MCF 10A (cell line): ENCODE measurements at regions of chr20 and their contacts with region 1.

Region 1: GRCh38 chr20:47501483-47502270 is at the start of gene NCOA3:
- DNase-seq: peak; percentile 95
- H3K4me3 Mint-ChIP-seq: peak within 1 kb of the TSS; percentile 94
- H3K27ac Mint-ChIP-seq: peak within 1 kb of the TSS; percentile 95
- H3K4me1 Mint-ChIP-seq: peaks cover 24% of the 10 kb centered on the region
- H3K27me3 Mint-ChIP-seq: no peaks in the 10 kb centered on the region
- CTCF ChIP-seq: peak; percentile 41
- total RNA-seq, gene NCOA3: 61.4 and 68.6 TPM in 2 replicates

Region 2: DNA sequence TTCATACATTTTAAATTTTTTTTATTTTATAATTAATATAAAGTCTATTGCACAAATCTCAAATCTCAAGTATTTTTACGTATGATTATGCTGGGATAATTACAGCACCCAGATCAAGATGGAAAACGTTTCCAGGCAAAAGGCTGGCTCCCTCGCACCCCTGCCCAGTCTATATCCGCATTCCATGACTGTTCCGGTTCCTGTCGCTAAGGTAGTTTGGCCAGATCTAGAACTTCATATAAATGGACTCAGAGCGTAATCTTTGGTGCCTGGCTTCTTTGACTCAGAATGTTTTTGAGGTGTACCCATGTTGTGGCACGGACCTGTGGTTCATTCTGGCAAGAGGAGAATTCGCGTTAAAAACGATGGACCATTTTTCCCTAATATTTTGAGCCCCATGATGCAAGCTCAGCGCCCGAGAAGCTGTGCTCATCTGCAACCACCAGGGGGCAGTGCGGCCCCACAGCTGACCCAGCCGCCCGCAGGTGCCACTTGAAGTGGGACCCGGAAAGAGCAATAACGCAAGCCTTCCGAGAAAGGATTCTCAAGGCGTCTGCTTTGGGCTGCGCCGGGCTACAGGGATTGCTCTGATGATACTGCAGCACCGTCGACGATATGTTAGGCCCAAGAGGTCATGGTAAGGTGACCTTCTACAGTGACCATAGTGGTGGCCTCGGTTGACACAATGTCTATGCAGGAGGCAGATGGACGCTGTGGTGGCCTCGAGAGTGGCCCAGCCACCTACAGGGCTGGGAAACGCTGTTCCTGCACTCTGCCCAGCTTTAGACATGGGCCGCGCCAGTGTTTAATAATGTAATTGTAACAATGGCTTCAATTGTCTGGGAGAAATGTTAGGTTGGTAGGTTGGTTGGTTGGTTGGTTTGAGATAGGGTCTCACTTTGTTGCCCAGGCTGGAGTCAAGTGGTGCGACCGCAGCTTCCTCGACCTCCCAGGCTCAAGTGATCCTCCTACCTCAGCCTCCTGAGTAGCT is 305.3 kb before region 1 on chr20:
- CTCF ChIA-PET with region 1: no interaction called
- POLR2A ChIA-PET with region 1: interaction called, 3 read pairs
- intact Hi-C with region 1: loop called (anchors 2 kb)
- DNase-seq: peak; percentile 70
- H3K4me3 Mint-ChIP-seq: no peak overlapping the region
- H3K27ac Mint-ChIP-seq: no peak overlapping the region
- H3K4me1 Mint-ChIP-seq: peaks cover 5% of the 10 kb centered on the region
- H3K27me3 Mint-ChIP-seq: no peaks in the 10 kb centered on the region
- CTCF ChIP-seq: peak; percentile 93

Region 3: DNA sequence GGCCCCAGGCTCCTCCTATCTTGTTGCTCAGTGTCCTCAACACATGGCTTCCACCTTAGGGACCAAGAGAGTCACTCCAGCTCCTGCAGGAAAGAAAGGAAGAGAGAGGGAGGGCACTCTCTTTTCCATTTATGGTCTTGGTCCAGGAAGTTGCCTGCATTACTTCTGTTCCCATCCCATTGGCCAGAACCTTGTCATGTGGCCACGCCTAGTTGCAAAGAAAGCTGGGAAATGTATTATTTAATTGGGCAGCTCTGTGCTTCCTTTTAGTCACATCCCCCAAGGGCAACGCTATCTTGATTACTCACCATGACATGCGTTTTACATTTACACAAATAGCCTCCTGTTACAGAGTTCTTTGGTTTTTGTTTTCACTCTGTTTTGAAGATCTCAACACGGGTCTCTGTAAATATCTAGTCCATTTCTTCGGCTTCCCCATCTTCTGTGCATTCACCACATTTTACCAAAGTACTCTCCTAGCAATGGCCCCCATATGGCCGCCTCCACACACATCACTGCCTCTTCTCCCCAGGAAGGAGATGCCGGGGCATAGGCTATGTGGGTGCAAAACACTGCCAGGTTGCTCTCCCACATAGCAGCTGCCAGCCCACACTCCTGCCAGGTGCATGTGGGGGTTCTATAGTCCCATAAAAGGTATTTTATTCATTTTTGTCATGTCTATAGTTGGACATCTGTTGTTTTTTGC is 109.5 kb before region 1 on chr20:
- CTCF ChIA-PET with region 1: interaction called, 3 read pairs
- POLR2A ChIA-PET with region 1: interaction called, 59 read pairs
- intact Hi-C with region 1: loop called (anchors 2 kb)
- DNase-seq: peak; percentile 97
- H3K4me3 Mint-ChIP-seq: peak overlapping the region; percentile 67
- H3K27ac Mint-ChIP-seq: peak overlapping the region; percentile 98
- H3K4me1 Mint-ChIP-seq: peaks cover 22% of the 10 kb centered on the region
- H3K27me3 Mint-ChIP-seq: no peaks in the 10 kb centered on the region
- CTCF ChIP-seq: no peak

Region 4: GRCh38 chr20:47464380-47465101 is 37.1 kb before region 1 on chr20:
- CTCF ChIA-PET with region 1: no interaction called
- POLR2A ChIA-PET with region 1: interaction called, 135 read pairs
- intact Hi-C with region 1: loop called (anchors 5 kb)
- DNase-seq: peak; percentile 99
- H3K4me3 Mint-ChIP-seq: peak overlapping the region; percentile 51
- H3K27ac Mint-ChIP-seq: peak overlapping the region; percentile 72
- H3K4me1 Mint-ChIP-seq: peaks cover 38% of the 10 kb centered on the region
- H3K27me3 Mint-ChIP-seq: no peaks in the 10 kb centered on the region
- CTCF ChIP-seq: no peak

Region 5: GRCh38 chr20:47527004-47527757 is 25.5 kb after region 1 on chr20:
- CTCF ChIA-PET with region 1: no interaction called
- POLR2A ChIA-PET with region 1: interaction called, 17 read pairs
- intact Hi-C with region 1: no loop called
- DNase-seq: no peak
- H3K4me3 Mint-ChIP-seq: no peak overlapping the region
- H3K27ac Mint-ChIP-seq: no peak overlapping the region
- H3K4me1 Mint-ChIP-seq: peaks cover 9% of the 10 kb centered on the region
- H3K27me3 Mint-ChIP-seq: no peaks in the 10 kb centered on the region
- CTCF ChIP-seq: no peak

Region 6: DNA sequence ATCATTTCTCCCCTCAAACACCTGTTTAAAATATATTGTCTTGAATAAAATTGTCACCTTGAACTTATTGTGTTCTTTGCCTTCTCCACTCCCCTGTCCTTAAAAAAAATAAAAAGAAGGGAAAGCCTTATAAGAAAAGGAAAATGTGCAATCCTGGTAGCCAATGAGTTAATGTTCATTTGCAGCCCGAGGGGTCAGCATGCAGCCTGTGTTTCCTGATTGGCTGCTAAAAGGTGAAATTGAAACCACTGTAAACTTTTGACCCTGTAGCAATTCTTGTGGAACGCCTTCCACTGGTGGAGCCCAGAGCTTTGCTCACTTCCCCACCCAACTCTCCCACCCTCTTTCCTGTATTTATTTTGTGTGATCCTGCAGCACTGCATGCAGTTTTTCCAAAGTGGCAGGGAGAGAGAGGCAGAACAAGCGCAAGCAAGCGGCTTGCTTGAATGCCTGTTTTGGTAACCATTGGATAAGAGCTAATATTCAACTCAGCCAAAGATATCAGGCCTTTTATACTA is 74.9 kb after region 1 on chr20:
- CTCF ChIA-PET with region 1: no interaction called
- POLR2A ChIA-PET with region 1: interaction called, 53 read pairs
- intact Hi-C with region 1: no loop called
- DNase-seq: peak; percentile 87
- H3K4me3 Mint-ChIP-seq: peak overlapping the region; percentile 52
- H3K27ac Mint-ChIP-seq: no peak overlapping the region
- H3K4me1 Mint-ChIP-seq: peaks cover 9% of the 10 kb centered on the region
- H3K27me3 Mint-ChIP-seq: no peaks in the 10 kb centered on the region
- CTCF ChIP-seq: no peak

Region 7: DNA sequence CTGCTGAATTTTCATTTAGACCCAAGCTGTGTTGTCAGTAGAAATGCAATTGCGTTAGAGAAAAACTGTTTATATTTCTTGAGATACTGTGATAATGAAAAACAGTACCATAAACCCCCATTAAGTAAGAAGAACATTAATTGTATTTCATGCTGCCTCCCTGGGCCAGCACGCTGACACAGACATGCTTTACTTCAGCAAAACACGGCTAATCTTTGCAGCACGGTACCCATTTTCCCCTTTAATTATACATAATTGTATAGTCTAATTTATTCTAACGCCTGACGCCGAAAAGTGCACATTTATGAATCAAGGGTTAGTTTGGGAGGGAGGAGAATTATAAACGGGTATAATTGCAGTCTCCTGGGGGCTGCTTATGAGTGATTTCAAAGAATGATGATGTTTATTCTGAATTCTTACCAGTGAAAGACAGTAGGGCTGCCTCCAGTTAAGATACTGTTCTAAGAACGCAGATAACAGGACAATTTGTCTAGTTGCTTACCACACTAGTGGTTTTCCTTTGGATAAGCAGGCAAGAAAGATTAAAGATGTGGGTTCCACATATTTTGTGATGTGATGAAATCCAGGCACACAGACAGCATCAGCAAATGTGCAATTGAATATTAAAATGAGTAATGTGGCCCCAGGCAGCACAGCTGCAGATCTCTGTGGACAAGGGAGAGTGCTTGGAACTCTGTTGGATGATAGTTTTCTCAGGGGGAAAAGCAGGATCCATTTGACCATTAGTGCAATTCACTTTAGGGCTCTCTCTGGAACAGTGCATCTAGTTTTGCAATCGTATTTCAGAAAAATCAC is 288.3 kb after region 1 on chr20:
- CTCF ChIA-PET with region 1: no interaction called
- POLR2A ChIA-PET with region 1: no interaction called
- intact Hi-C with region 1: no loop called
- DNase-seq: peak; percentile 90
- H3K4me3 Mint-ChIP-seq: peak overlapping the region; percentile 77
- H3K27ac Mint-ChIP-seq: peak overlapping the region; percentile 94
- H3K4me1 Mint-ChIP-seq: peaks cover 40% of the 10 kb centered on the region
- H3K27me3 Mint-ChIP-seq: no peaks in the 10 kb centered on the region
- CTCF ChIP-seq: no peak

Region 8: GRCh38 chr20:48065824-48066660 is 564.4 kb after region 1 on chr20:
- CTCF ChIA-PET with region 1: no interaction called
- POLR2A ChIA-PET with region 1: no interaction called
- intact Hi-C with region 1: no loop called
- DNase-seq: peak; percentile 89
- H3K4me3 Mint-ChIP-seq: no peak overlapping the region
- H3K27ac Mint-ChIP-seq: peak overlapping the region; percentile 66
- H3K4me1 Mint-ChIP-seq: peaks cover 21% of the 10 kb centered on the region
- H3K27me3 Mint-ChIP-seq: no peaks in the 10 kb centered on the region
- CTCF ChIP-seq: no peak